Right ventricle myocardium superior (tissue), 1 donor: ENCODE measurements at regions of chr9 and their contacts with region 1.

Region 1: DNA sequence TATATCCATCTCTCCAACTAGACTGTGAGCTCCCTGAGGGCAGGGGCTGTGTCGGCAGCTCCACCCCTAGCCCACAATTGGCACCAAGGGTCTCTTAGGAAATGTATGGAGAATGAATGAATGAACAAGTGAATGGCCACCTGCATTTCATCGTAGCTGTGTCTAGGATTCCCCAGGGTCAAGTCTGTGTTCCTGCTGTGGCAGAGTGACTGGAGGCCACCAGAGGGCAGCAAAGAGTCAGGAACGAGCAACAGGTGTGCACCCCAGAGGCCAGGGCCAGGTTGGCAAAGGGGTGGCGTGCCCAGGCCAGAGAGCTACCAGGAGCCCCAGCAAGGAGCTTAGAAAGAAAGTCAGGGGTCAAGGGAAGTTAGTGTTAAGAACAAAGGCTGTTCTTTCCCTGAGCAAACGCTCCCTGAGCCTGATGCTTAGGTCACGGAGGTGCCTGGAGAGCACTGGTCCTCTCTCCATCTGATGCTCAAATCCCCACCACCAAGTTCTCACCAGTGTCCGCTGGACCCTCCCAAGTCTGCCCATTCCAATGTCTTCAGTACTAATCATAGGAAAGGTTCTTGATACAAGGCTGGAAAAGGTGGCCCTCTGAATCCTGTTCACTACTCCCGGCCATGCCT is 160.7 kb downstream of the PAX5 start:
- DNase-seq: peak; percentile 73
- ATAC-seq: peak; percentile 89

Region 2: GRCh38 chr9:36284226-36284625 is 589.1 kb before region 1 on chr9:
- intact Hi-C with region 1: no loop called
- DNase-seq: no peak
- ATAC-seq: no peak

Region 3: GRCh38 chr9:37262410-37262809 is 389.0 kb after region 1 on chr9:
- intact Hi-C with region 1: loop called (anchors 10 kb)
- DNase-seq: no peak
- ATAC-seq: no peak